ENCODE measurements at regions of chr3 and their contacts with region 1.

Region 1: GRCh38 chr3:169133178-169134161 is 530.0 kb downstream of the MECOM start:
- DNase-seq: peak in 2 of 3 donors; percentile 66 to 71
- H3K4me3 ChIP-seq: no peak overlapping the region
- H3K27ac ChIP-seq: no peak overlapping the region
- H3K4me1 ChIP-seq: peaks cover 4 to 16% (median 4%) of the 10 kb centered on the region in 4 experiments
- H3K27me3 ChIP-seq: no peaks in the 10 kb centered on the region

Region 2: DNA sequence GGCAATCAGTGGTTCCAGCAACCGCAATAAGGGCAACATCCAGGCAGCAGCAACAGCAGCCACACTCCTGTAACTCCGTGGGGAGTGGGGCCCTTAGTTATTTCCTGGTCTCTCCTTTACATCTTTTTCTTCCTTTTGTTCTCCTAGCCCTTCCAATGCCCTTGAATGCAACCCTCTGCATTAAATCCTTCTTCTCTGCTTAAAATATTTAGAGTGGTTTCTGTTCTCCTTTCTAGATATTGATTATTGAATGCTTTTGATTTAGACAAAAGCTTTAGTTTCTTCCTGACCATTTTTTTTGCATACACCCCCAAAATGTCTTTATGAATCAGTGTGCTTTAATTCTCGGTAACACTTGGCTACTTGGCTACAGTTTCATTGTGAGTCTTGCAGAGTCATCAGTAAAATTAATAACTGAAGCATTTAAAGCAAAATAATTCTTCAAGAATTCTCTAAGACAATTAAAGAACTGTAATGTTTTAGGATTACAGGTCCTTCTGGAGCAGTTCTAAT is 56.0 kb before region 1 on chr3:
- CTCF ChIA-PET with region 1: no interaction called
- POLR2A ChIA-PET with region 1: no interaction called
- DNase-seq: no peak
- H3K4me3 ChIP-seq: no peak overlapping the region
- H3K27ac ChIP-seq: no peak overlapping the region
- H3K4me1 ChIP-seq: no peaks in the 10 kb centered on the region
- H3K27me3 ChIP-seq: no peaks in the 10 kb centered on the region

Region 3: DNA sequence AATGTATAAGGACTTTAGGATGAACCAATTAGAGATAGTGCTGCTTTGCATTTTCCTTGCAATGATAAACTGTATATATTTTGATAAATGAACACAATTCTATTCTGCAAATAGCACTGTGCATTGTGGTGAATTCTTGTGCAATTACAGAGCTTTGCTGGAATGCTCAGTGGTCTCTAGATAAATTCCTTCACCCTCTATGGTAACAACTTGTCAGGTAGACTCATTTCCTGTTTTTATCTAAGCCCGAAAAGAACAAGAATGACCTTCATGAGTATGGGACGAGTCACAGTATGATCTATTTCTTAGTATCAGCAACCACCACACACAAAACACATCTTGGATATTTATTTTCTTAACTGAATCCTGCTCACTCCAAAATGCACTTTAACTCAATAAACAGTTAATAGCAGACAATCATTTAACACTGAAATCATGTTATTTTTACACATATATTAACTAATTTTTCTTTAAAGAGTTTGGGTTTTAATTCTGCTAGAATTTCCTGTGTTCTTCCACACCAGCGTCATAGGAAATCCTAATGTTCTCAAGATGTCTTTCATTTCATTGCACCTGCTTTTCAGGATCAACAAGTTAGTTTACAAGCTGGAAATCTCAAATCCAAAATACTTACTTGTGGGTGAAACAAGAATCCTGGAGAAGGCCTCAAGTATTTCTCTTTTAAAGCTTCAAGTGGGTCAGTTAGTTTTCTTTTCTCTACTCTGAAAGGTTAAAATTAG is 21.1 kb before region 1 on chr3:
- CTCF ChIA-PET with region 1: no interaction called
- POLR2A ChIA-PET with region 1: no interaction called
- DNase-seq: peak in 2 of 3 donors; percentile 14 to 17
- H3K4me3 ChIP-seq: no peak overlapping the region
- H3K27ac ChIP-seq: peak overlapping the region in 1 of 2 experiments; percentile 5
- H3K4me1 ChIP-seq: peaks cover 3 to 17% (median 5%) of the 10 kb centered on the region in 4 experiments
- H3K27me3 ChIP-seq: no peaks in the 10 kb centered on the region

Region 4: GRCh38 chr3:169158379-169158778 is 24.9 kb after region 1 on chr3:
- CTCF ChIA-PET with region 1: no interaction called
- POLR2A ChIA-PET with region 1: no interaction called
- DNase-seq: no peak
- H3K4me3 ChIP-seq: peak overlapping the region in 2 of 7 experiments; percentile 38 to 53
- H3K27ac ChIP-seq: no peak overlapping the region
- H3K4me1 ChIP-seq: peaks cover 4 to 14% (median 7%) of the 10 kb centered on the region in 4 experiments
- H3K27me3 ChIP-seq: no peaks in the 10 kb centered on the region

Region 5: GRCh38 chr3:169744366-169745054 is 611.0 kb after region 1 on chr3:
- CTCF ChIA-PET with region 1: interaction called, 23 read pairs
- POLR2A ChIA-PET with region 1: no interaction called
- DNase-seq: peak; percentile 53 to 74 (median 68)
- H3K4me3 ChIP-seq: no peak overlapping the region
- H3K27ac ChIP-seq: no peak overlapping the region
- H3K4me1 ChIP-seq: peaks cover 0 to 6% (median 2%) of the 10 kb centered on the region in 4 experiments
- H3K27me3 ChIP-seq: no peaks in the 10 kb centered on the region